Heart right ventricle (tissue), 16 donors: ENCODE measurements at regions of chr10 and their contacts with region 1.

Region 1: GRCh38 chr10:20674926-20675325 is 222.2 kb downstream of the NEBL start:
- DNase-seq: peak in 1 of 2 donors; percentile 14
- ATAC-seq: peak in 5 of 8 donors; percentile 9 to 63 (median 41)
- H3K4me3 ChIP-seq: no peak overlapping the region
- H3K27ac ChIP-seq: peak overlapping the region in 4 of 10 donors; percentile 12 to 60 (median 34)
- H3K4me1 ChIP-seq: peaks cover 0 to 47% (median 9%) of the 10 kb centered on the region in 9 donors
- H3K27me3 ChIP-seq: no peaks in the 10 kb centered on the region
- CTCF ChIP-seq: no peak

Region 2: DNA sequence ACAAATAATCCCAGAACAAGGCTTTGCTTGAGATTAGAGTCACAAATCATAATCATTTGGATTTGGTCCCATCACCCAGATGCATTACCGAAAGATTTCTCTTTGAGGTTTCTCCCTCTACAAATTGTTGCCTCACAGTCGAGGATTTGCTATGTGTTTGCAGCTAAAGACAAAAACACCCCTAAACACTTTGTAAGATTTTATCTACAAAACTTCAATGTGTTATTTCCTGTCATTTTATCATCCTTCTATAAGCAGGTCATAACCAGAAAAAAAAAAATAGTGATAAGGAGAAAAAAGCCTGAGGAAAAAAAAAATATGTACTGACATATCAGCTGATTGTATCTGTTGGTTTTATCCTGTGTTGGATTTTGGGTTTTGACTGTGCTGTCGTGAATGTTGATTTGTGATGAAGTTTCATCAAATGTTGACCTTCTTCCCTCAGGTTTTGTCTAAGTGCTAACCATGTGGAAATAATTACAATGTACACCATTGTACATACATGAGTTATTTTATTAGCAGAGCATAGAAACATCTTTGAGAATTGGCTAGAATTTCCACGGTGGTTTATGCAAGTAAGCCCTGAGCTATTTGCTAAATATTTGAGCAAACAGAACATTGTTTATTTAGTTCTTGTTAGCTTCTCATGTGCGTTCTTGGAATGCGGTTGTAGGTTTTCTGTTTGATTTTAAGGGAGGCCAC is 52.2 kb before region 1 on chr10:
- intact Hi-C with region 1: loop called in 1 of 10 experiments (anchors 5 kb)
- DNase-seq: no peak
- ATAC-seq: peak in 2 of 8 donors; percentile 32 to 35
- H3K4me3 ChIP-seq: no peak overlapping the region
- H3K27ac ChIP-seq: peak overlapping the region in 8 of 10 donors; percentile 17 to 69 (median 60)
- H3K4me1 ChIP-seq: peaks cover 0 to 34% (median 5%) of the 10 kb centered on the region in 9 donors
- H3K27me3 ChIP-seq: no peaks in the 10 kb centered on the region
- CTCF ChIP-seq: no peak

Region 3: DNA sequence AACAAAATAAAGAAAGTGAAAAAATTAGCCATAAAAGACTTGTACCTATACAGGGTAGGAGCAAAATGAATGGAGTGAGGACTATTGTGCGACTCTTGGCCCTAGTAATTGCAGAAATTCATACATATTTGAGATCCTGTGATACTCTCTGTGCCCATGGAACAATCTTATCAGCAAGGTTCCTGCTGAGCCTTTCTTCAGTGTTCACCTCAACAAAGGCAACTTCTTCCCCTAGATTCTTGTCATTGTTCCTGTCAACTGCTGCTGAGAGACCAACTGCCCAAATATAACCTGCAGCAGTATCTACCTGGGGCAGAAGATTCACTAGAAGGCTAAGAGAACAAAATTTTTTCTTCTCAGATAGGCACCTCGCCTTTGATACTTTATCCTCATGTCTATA is 34.8 kb after region 1 on chr10:
- intact Hi-C with region 1: loop called in 1 of 10 experiments (anchors 2 kb)
- DNase-seq: no peak
- ATAC-seq: no peak
- H3K4me3 ChIP-seq: no peak overlapping the region
- H3K27ac ChIP-seq: no peak overlapping the region
- H3K4me1 ChIP-seq: no peaks in the 10 kb centered on the region
- H3K27me3 ChIP-seq: no peaks in the 10 kb centered on the region
- CTCF ChIP-seq: no peak

Region 4: GRCh38 chr10:20768843-20769242 is 93.9 kb after region 1 on chr10:
- intact Hi-C with region 1: no loop called
- DNase-seq: no peak
- ATAC-seq: peak in 2 of 8 donors; percentile 26 to 46
- H3K4me3 ChIP-seq: no peak overlapping the region
- H3K27ac ChIP-seq: no peak overlapping the region
- H3K4me1 ChIP-seq: peaks cover 0 to 16% (median 4%) of the 10 kb centered on the region in 9 donors
- H3K27me3 ChIP-seq: no peaks in the 10 kb centered on the region
- CTCF ChIP-seq: peak; percentile 19 to 74 (median 58)